ENCODE measurements at regions of chr9 and their contacts with region 1.

Region 1: GRCh38 chr9:18255158-18255629 is 218.8 kb upstream of the ADAMTSL1 start:
- DNase-seq: peak; percentile 60 to 90 (median 82)
- ATAC-seq: peak; percentile 95
- H3K4me3 ChIP-seq: no peak overlapping the region
- H3K27ac ChIP-seq: no peak overlapping the region
- H3K4me1 ChIP-seq: no peaks in the 10 kb centered on the region
- H3K27me3 ChIP-seq: peaks cover 0 to 4% of the 10 kb centered on the region in 2 donors
- CTCF ChIP-seq: peak; percentile 87 to 94

Region 2: GRCh38 chr9:18202924-18203323 is 52.3 kb before region 1 on chr9:
- intact Hi-C with region 1: no loop called
- DNase-seq: no peak
- ATAC-seq: no peak
- H3K4me3 ChIP-seq: no peak overlapping the region
- H3K27ac ChIP-seq: no peak overlapping the region
- H3K4me1 ChIP-seq: no peaks in the 10 kb centered on the region
- H3K27me3 ChIP-seq: no peaks in the 10 kb centered on the region
- CTCF ChIP-seq: no peak

Region 3: GRCh38 chr9:18442629-18443491 is 187.7 kb after region 1 on chr9:
- intact Hi-C with region 1: loop called in 1 of 2 experiments (anchors 10 kb)
- DNase-seq: peak; percentile 42 to 84 (median 58)
- ATAC-seq: peak; percentile 87
- H3K4me3 ChIP-seq: no peak overlapping the region
- H3K27ac ChIP-seq: no peak overlapping the region
- H3K4me1 ChIP-seq: peaks cover 0 to 3% of the 10 kb centered on the region in 2 donors
- H3K27me3 ChIP-seq: peaks cover 0 to 11% of the 10 kb centered on the region in 2 donors
- CTCF ChIP-seq: peak; percentile 79 to 87

Region 4: GRCh38 chr9:19028835-19029451 is 773.7 kb after region 1 on chr9:
- intact Hi-C with region 1: loop called in 1 of 2 experiments (anchors 5 kb)
- DNase-seq: peak in 2 of 4 donors; percentile 62 to 83
- ATAC-seq: peak; percentile 91
- H3K4me3 ChIP-seq: no peak overlapping the region
- H3K27ac ChIP-seq: no peak overlapping the region
- H3K4me1 ChIP-seq: no peaks in the 10 kb centered on the region
- H3K27me3 ChIP-seq: peaks cover 0 to 16% of the 10 kb centered on the region in 2 donors
- CTCF ChIP-seq: peak; percentile 64 to 77